GM13976 (cell line): ENCODE measurements at regions of chr1 and their contacts with region 1.

Region 1: GRCh38 chr1:15975805-15976680 is at the start of gene ZBTB17:
- DNase-seq: peak; percentile 95
- CTCF ChIP-seq: no peak

Region 2: GRCh38 chr1:15803354-15803753 is 172.7 kb before region 1 on chr1:
- in situ Hi-C with region 1: loop called (anchors 25 kb)
- DNase-seq: peak; percentile 60
- CTCF ChIP-seq: peak; percentile 61

Region 3: DNA sequence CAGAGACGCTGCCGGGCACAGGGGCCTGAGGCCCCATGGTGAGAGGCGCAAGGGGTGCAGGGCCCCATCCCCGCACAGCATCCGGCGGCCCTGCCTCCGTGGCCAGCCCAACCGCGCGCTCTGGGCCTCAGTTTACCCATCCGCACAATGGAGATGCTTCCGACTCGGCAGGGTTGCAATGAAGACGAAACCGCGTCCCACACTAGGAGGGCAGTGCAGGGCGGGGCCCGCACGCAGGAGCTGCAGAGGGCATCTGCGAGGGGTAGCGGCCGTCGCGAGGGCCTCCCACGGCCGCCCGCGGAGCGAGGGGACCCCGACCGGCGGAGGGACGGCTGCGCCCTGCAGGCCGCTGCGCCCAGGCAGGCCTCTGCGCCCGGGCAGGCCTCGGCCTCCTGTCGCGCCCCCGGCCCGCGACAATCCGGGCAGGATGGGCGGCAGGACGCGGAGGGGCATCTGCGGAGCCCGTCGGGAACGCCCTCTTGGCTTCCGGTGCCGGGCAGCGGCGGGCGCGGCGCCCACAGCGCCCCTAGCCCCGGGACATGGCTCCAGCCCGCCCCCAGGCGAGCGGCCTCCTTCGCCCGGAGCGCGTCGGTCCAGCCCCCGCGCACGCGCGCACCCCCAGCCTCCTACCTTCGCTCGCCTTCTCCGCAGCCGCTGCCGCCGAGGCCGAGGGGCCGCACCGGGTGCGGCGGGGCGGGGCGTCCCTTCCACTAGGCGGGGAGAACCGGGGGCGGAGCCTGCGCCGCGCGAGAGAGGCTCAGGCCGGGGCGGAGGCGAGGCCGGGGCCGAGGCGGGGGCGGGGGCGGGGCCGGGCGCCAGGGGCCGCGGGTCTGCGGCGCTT is 522.8 kb after region 1 on chr1:
- in situ Hi-C with region 1: no loop called
- DNase-seq: peak; percentile 98
- CTCF ChIP-seq: peak; percentile 18